Activated CD4-positive, alpha-beta T cell treated with anti-CD3 and anti-CD28 coated beads for 36 hours (primary cell): ENCODE measurements at regions of chr17 and their contacts with region 1.

Region 1: DNA sequence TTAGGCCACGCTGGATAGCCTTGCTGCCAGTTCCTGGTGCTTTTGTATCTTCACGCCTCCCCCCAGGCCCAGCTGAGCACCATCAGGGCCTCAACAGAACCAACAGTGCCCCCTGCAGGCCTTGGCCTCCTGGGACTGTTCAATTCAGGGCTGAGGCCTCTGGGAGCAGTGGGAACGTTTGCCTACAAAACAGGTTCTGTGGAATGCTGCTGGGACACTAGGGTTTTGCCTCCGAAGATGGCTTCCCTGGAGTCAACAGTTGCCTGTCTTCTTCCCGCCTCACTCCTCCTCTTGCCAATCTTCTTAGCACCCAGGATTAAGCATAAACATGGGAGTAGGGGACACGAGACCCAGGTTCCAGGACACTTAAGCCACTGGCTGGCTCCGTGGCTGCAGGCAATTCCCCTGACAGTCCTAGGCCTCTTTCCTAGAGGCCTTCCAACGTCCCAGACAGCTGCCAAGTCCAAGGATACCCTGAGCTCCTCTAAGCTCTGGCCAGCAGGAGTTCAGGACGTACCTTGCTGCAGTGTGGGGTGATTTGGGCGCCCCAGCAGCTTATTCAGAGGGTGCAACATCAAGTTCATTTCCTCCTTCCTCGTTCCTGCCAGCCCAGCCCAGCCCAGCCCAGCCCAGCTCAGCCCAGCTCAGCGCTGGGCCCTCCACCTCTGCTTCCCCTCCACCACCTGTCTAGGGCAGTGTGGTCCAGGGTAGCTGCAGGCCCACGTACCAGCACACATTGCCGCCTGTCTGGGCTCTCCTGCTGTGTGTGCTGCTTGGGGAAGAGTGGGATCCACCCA is 246.6 kb upstream of the RPL38 start:
- DNase-seq: peak; percentile 78
- ATAC-seq: peak; percentile 72
- H3K4me3 Mint-ChIP-seq: no peak overlapping the region
- H3K27ac Mint-ChIP-seq: no peak overlapping the region
- H3K4me1 Mint-ChIP-seq: no peaks in the 10 kb centered on the region
- H3K27me3 Mint-ChIP-seq: peaks cover 3% of the 10 kb centered on the region

Region 2: DNA sequence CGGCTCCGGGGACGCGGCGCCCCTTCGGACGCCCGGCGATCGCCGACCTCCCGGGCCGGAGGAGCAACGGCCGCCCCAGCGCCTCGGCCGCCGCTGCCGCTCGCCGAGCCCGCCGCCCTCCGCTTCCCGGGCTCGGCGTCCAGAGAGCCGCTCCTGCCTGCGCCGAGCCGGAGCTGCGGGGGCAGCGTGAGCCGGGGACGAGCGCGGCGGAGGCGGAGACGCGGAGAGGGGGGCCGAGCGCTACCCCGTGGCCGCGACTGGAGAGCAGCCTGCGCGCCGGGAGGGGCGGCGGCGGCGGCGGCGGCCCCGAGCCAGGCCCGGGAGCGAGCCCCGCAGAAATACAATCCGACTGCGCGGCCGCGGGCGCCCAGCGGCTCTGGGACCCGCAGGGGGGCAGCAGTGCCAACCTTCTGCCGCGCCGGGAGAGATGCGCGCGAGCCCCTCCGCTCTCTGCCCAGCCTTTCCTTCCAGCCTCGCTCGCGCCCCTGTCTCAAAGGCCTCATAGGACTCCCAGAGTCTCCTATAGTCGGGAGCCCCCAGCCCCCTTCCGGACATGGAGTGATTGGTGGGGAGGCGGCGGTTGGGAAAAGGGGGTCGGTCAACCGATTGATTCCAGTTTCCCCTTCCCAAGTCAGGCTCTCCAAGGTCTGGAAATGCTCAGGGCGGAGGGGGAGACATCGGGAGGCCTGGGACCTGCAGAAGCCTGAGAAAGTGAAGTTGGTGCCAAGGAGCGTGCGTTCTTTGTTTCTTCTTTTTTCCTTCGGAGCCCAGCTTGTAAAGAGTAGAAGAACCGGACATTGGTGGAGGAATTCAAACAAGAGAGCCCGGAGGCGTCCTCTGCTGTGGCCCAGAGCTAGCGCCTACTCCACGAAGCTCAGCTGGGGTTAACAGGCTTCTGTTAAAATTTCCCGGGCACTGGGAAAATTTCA is 311.6 kb before region 1 on chr17:
- CTCF ChIA-PET with region 1: no interaction called
- POLR2A ChIA-PET with region 1: no interaction called
- intact Hi-C with region 1: loop called in 1 of 2 experiments (anchors 10 kb)
- DNase-seq: peak; percentile 66
- ATAC-seq: peak; percentile 54
- H3K4me3 Mint-ChIP-seq: peak overlapping the region; percentile 32
- H3K27ac Mint-ChIP-seq: no peak overlapping the region
- H3K4me1 Mint-ChIP-seq: peaks cover 14% of the 10 kb centered on the region
- H3K27me3 Mint-ChIP-seq: peaks cover 12% of the 10 kb centered on the region

Region 3: GRCh38 chr17:73722165-73722564 is 234.7 kb before region 1 on chr17:
- CTCF ChIA-PET with region 1: no interaction called
- POLR2A ChIA-PET with region 1: no interaction called
- intact Hi-C with region 1: loop called in 1 of 2 experiments (anchors 2 kb)
- DNase-seq: peak; percentile 57
- ATAC-seq: peak; percentile 90
- H3K4me3 Mint-ChIP-seq: no peak overlapping the region
- H3K27ac Mint-ChIP-seq: peak overlapping the region; percentile 79
- H3K4me1 Mint-ChIP-seq: peaks cover 47% of the 10 kb centered on the region
- H3K27me3 Mint-ChIP-seq: no peaks in the 10 kb centered on the region

Region 4: DNA sequence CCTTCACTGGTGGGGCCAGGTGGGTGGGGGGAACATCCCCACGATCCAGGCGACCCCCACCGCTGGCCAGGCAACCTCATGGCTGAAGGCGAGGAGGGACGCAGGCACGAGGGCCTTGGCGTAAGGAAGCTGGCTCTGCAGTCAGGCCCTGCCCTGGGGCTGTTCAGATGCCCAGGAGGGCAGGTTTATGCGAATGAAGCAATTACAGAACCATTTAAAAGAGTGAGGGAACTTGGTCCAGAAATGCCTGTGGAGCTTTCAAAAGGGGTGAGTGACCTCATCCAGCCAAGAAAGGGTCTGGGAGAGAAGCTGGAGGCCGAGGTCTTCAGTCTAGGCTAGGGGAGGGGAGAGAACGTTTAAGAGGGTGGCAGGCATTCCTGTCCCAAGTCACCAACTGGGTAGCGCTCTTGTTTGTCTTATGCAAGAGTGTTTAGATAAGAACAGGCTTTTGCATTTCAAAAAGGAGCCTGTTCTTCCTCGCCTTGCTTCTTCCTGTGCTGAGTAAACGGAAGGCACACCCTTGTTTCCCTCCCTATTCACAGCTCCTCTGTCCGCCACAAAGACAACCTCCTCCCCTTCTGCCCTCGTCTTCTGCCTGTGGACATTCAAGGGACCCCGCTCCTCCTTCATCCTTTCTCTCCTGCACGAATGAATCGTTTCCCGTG is 129.1 kb before region 1 on chr17:
- CTCF ChIA-PET with region 1: no interaction called
- POLR2A ChIA-PET with region 1: no interaction called
- intact Hi-C with region 1: no loop called
- DNase-seq: no peak
- ATAC-seq: peak; percentile 51
- H3K4me3 Mint-ChIP-seq: no peak overlapping the region
- H3K27ac Mint-ChIP-seq: peak overlapping the region; percentile 69
- H3K4me1 Mint-ChIP-seq: peaks cover 81% of the 10 kb centered on the region
- H3K27me3 Mint-ChIP-seq: no peaks in the 10 kb centered on the region

Region 5: GRCh38 chr17:74176546-74177001 is 219.7 kb after region 1 on chr17:
- CTCF ChIA-PET with region 1: no interaction called
- POLR2A ChIA-PET with region 1: no interaction called
- intact Hi-C with region 1: loop called in 1 of 2 experiments (anchors 1 kb)
- DNase-seq: peak; percentile 72
- ATAC-seq: peak; percentile 80
- H3K4me3 Mint-ChIP-seq: no peak overlapping the region
- H3K27ac Mint-ChIP-seq: no peak overlapping the region
- H3K4me1 Mint-ChIP-seq: no peaks in the 10 kb centered on the region
- H3K27me3 Mint-ChIP-seq: peaks cover 9% of the 10 kb centered on the region